HCT116 (cell line): ENCODE measurements at regions of chr10 and their contacts with region 1.

Region 1: DNA sequence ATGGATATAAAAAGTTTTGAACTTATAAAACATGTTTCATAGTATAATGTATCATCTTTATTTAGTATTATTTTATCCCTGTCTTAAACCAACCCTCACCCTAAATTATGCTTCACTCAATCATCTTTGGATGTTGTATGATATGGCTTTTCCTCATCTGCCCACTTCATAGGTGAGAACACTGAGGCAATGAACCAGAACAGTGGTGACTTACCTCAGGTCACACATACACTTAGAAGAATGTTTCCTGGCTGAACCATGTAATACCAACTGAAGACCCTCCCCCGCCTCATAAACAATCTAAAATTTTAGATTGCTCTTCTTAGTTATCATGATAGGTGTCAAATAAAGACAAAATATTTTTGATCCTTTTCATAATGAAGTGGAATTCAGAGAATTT is 22.6 kb upstream of the STOX1 start:
- DNase-seq: no peak
- ATAC-seq: no peak
- H3K4me3 ChIP-seq: no peak overlapping the region
- H3K27ac ChIP-seq: peak overlapping the region; percentile 62
- H3K4me1 ChIP-seq: peaks cover 11 to 19% of the 10 kb centered on the region in 2 experiments
- H3K27me3 ChIP-seq: no peaks in the 10 kb centered on the region
- CTCF ChIP-seq: no peak
- POLR2A ChIP-seq: no peak
- RAD21 ChIP-seq: no peak

Region 2: GRCh38 chr10:69123747-69124562 is 319.3 kb after region 1 on chr10 and contains the start of gene VPS26A:
- CTCF ChIA-PET with region 1: no interaction called
- POLR2A ChIA-PET with region 1: no interaction called
- RAD21 ChIA-PET with region 1: no interaction called
- intact Hi-C with region 1: loop called (anchors 5 kb)
- DNase-seq: peak; percentile 94
- ATAC-seq: peak; percentile 91
- H3K4me3 ChIP-seq: peak within 1 kb of the TSS; percentile 68 to 84
- H3K27ac ChIP-seq: peak within 1 kb of the TSS; percentile 75
- H3K4me1 ChIP-seq: peaks cover 6 to 14% of the 10 kb centered on the region in 2 experiments; a peak in 3 of 4 replicates
- H3K27me3 ChIP-seq: no peaks in the 10 kb centered on the region
- CTCF ChIP-seq: peak in 1 of 3 experiments; percentile 27; a peak in 1 of 6 replicates
- POLR2A ChIP-seq: peak; percentile 83
- RAD21 ChIP-seq: no peak; the same call in 1 of the 2 replicates
- total RNA-seq, gene VPS26A: 65.1 TPM